ENCODE measurements at regions of chr15 and their contacts with region 1.

Region 1: GRCh38 chr15:78308422-78309032 is 9.1 kb upstream of the SKIC8 start:
- DNase-seq: peak; percentile 89
- H3K4me3 ChIP-seq: no peak overlapping the region
- H3K27ac ChIP-seq: no peak overlapping the region
- H3K4me1 ChIP-seq: peaks cover 11 to 20% of the 10 kb centered on the region in 2 experiments; a peak in 3 of 4 replicates
- H3K27me3 ChIP-seq: no peaks in the 10 kb centered on the region
- CTCF ChIP-seq: peak; percentile 96
- EP300 ChIP-seq: no peak
- RAD21 ChIP-seq: peak; percentile 99

Region 2: GRCh38 chr15:78241007-78241406 is 67.5 kb before region 1 on chr15:
- CTCF ChIA-PET with region 1: no interaction called
- POLR2A ChIA-PET with region 1: no interaction called
- DNase-seq: peak; percentile 93
- H3K4me3 ChIP-seq: peak overlapping the region in 1 of 2 experiments; percentile 35; a peak in 1 of 4 replicates
- H3K27ac ChIP-seq: no peak overlapping the region
- H3K4me1 ChIP-seq: peaks cover 0 to 12% of the 10 kb centered on the region in 2 experiments; a peak in 1 of 4 replicates
- H3K27me3 ChIP-seq: peaks cover 5% of the 10 kb centered on the region; the same call in 1 of the 2 replicates
- CTCF ChIP-seq: peak; percentile 88
- EP300 ChIP-seq: peak in 1 of 2 experiments; percentile 13; a peak in 1 of 4 replicates
- RAD21 ChIP-seq: peak; percentile 95

Region 3: DNA sequence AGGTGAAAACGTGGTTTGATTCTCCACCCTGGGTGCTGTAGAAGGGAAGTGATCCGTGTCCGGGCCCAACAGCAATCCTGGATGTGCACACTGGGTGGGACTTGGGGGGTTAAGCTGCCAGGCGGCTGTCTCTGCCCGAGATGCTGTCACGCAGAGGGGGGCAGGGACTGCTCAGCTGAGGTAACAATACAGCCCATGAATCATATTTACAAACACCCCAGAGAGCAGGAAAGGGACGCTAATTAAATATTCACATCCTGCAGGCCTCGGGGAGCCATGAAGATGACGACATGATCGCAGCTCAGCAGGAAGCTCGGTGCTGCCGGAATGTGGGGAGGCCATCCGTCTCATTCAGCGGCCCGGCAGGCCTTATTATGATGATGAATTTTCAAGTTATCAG is 13.7 kb after region 1 on chr15:
- CTCF ChIA-PET with region 1: interaction called, 41 read pairs
- POLR2A ChIA-PET with region 1: no interaction called
- DNase-seq: peak; percentile 81
- H3K4me3 ChIP-seq: no peak overlapping the region
- H3K27ac ChIP-seq: peak overlapping the region in 1 of 2 experiments; percentile 67; a peak in 2 of 4 replicates
- H3K4me1 ChIP-seq: peaks cover 3 to 27% of the 10 kb centered on the region in 2 experiments; a peak in 2 of 4 replicates
- H3K27me3 ChIP-seq: no peaks in the 10 kb centered on the region
- CTCF ChIP-seq: no peak
- EP300 ChIP-seq: peak in 1 of 2 experiments; percentile 40; a peak in 1 of 4 replicates
- RAD21 ChIP-seq: no peak

Region 4: DNA sequence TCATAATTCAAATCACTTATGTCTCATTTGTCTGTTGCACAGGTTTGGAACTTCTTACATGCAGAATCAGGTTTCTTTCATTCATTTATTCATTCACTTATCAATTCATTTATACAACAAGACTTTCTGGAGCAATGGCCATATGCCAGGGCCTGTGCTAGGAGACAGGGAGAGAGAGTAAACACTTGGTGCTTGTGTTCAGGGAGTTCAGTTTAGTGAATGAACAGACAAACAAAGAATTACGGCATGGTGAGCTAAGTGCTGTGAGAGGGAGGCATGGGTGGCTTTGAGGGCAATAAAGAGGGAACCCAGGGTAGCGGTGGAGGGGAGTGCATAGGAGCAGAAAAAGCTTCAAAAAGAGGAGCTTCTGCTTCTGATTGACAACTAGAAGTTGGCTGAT is 121.0 kb after region 1 on chr15:
- CTCF ChIA-PET with region 1: interaction called, 772 read pairs
- POLR2A ChIA-PET with region 1: no interaction called
- DNase-seq: no peak
- H3K4me3 ChIP-seq: no peak overlapping the region
- H3K27ac ChIP-seq: no peak overlapping the region
- H3K4me1 ChIP-seq: no peaks in the 10 kb centered on the region
- H3K27me3 ChIP-seq: no peaks in the 10 kb centered on the region; the same call in 1 of the 2 replicates
- CTCF ChIP-seq: no peak
- EP300 ChIP-seq: no peak
- RAD21 ChIP-seq: no peak

Region 5: DNA sequence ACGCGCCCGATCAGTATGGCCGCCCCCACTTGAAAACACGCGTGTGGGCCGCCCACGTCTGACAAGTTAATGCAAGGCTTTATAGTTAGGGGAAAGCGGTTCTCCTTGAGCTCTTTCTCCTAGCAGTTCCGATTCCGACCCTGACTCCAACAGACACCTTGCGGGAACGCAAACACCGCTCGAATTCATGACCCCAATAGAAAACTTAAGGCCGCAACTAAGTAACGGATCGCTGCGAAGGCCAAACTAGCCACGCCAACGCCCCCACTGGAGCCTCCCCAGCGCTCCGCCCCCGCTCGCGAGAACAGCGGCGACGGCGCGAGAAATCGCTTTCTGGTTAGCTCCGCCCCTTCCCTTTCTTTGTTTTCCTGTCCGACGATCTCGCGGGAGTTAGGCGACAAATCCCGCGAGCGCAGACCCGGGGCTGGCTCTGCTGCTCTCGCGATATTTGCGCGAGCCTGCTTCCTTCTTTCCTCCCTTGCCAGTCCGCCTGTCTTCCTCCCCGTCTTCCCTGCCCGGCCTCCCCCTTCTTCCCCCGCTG is 129.3 kb after region 1 on chr15 and contains the start of gene IREB2:
- CTCF ChIA-PET with region 1: interaction called, 31 read pairs
- POLR2A ChIA-PET with region 1: no interaction called
- DNase-seq: peak; percentile 99
- H3K4me3 ChIP-seq: peak within 1 kb of the TSS; percentile 85 to 91
- H3K27ac ChIP-seq: peak within 1 kb of the TSS; percentile 91 to 92
- H3K4me1 ChIP-seq: peaks cover 12 to 15% of the 10 kb centered on the region in 2 experiments; a peak in 3 of 4 replicates
- H3K27me3 ChIP-seq: no peaks in the 10 kb centered on the region
- CTCF ChIP-seq: no peak
- EP300 ChIP-seq: peak in 1 of 2 experiments; percentile 18; a peak in 1 of 4 replicates
- RAD21 ChIP-seq: no peak
- polyA plus RNA-seq, gene IREB2: 9.5 and 13.7 TPM in 2 replicates

Region 6: DNA sequence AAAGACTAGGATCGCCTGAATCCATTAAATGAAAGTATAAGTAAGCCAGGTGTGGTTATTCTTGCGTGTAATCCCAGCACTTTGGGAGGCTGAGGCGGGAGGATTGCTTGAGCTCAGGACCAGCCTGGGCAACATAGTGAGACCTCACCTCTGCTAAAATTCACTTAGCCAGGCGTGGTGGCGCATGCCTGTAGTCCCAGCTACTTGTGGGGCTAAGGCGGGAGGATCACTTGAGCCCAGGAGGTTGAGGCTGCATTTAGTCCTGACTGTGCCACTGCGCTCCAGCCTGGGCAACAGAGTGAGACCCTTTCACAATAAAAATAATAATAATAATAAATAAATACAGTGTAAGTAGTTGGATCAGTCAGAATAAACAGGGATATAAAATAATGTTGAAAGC is 173.4 kb after region 1 on chr15:
- CTCF ChIA-PET with region 1: interaction called, 26 read pairs
- POLR2A ChIA-PET with region 1: no interaction called
- DNase-seq: no peak
- H3K4me3 ChIP-seq: no peak overlapping the region
- H3K27ac ChIP-seq: no peak overlapping the region
- H3K4me1 ChIP-seq: no peaks in the 10 kb centered on the region
- H3K27me3 ChIP-seq: no peaks in the 10 kb centered on the region
- CTCF ChIP-seq: no peak
- EP300 ChIP-seq: no peak
- RAD21 ChIP-seq: no peak

Region 7: DNA sequence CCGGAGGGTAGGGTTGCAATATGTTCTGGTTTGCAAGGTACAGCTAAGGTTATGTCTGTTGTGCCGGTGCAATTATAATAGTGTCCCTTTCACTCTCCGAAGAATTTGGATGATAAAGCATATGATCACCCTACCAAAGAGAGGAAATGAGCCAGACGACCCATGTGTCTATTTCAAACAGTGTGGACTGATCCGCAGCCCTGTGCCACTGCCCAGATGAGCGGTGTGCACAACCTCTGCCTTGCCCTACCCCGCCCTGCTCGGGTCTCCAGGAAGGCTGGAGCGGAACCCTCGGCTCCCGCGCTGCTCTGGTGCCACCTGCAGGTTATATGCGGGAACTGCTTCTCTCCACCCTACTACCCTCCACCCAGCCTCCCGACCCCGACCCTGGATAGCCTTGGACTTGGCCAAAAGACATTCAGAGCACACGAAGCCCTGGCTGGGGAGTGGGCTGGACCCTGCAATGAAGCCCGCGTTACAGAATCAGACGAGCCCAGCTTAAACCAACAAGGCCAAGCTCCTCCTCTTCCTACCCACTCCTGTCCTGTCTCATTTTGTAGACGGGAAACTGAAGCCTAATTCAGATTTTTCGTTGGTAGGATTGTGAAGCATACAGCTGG is 400.8 kb after region 1 on chr15:
- CTCF ChIA-PET with region 1: interaction called, 11 read pairs
- POLR2A ChIA-PET with region 1: no interaction called
- DNase-seq: peak; percentile 84
- H3K4me3 ChIP-seq: peak overlapping the region; percentile 30 to 52; a peak in 3 of 4 replicates
- H3K27ac ChIP-seq: peak overlapping the region in 1 of 2 experiments; percentile 98; a peak in 2 of 4 replicates
- H3K4me1 ChIP-seq: peaks cover 0 to 22% of the 10 kb centered on the region in 2 experiments; a peak in 2 of 4 replicates
- H3K27me3 ChIP-seq: peaks cover 10% of the 10 kb centered on the region; the same call in 1 of the 2 replicates
- CTCF ChIP-seq: peak; percentile 85
- EP300 ChIP-seq: no peak
- RAD21 ChIP-seq: peak; percentile 94

Region 8: DNA sequence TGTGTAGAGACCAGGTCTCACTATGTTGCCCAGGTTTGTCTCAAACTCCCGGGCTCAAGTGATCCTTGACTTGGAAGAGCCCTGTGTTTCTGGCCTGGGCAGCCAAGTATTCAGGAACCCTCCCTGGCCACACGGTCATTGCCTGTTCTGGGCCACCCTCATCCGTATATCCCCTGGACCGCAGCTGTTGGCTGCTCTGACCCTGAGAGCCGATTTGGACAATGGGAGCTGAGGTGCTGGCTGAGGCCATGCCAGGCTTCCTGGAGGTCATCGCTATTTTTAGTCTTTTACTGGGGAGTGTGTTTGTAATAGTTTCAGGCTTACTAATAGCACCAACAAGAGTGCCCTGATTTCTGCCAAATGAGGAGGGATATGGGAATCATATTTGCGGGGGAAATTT is 442.0 kb after region 1 on chr15:
- CTCF ChIA-PET with region 1: interaction called, 21 read pairs
- POLR2A ChIA-PET with region 1: no interaction called
- DNase-seq: no peak
- H3K4me3 ChIP-seq: no peak overlapping the region
- H3K27ac ChIP-seq: peak overlapping the region in 1 of 2 experiments; percentile 45; a peak in 1 of 4 replicates
- H3K4me1 ChIP-seq: peaks cover 0 to 49% of the 10 kb centered on the region in 2 experiments; a peak in 2 of 4 replicates
- H3K27me3 ChIP-seq: no peaks in the 10 kb centered on the region
- CTCF ChIP-seq: no peak
- EP300 ChIP-seq: no peak
- RAD21 ChIP-seq: no peak

Measured in SK-N-SH (cell line).